ENCODE measurements at regions of chr2 and their contacts with region 1.

Region 1: GRCh38 chr2:233690435-233690834 is 2.3 kb upstream of the UGT1A6 start:
- DNase-seq: peak; percentile 96 to 99
- H3K4me3 ChIP-seq: peak overlapping the region; percentile 69; the same call in 1 of the 2 replicates
- H3K27ac ChIP-seq: peak overlapping the region; percentile 97
- H3K4me1 ChIP-seq: peaks cover 37% of the 10 kb centered on the region
- H3K27me3 ChIP-seq: no peaks in the 10 kb centered on the region
- CTCF ChIP-seq: no peak

Region 2: GRCh38 chr2:233178994-233179847 is 511.2 kb before region 1 on chr2:
- CTCF ChIA-PET with region 1: no interaction called
- POLR2A ChIA-PET with region 1: no interaction called
- intact Hi-C with region 1: no loop called
- DNase-seq: peak in 1 of 2 experiments; percentile 23
- H3K4me3 ChIP-seq: no peak overlapping the region
- H3K27ac ChIP-seq: no peak overlapping the region
- H3K4me1 ChIP-seq: peaks cover 14% of the 10 kb centered on the region; the same call in 1 of the 2 replicates
- H3K27me3 ChIP-seq: no peaks in the 10 kb centered on the region
- CTCF ChIP-seq: no peak

Region 3: GRCh38 chr2:233353769-233354499 is 336.5 kb before region 1 on chr2 and contains the start of gene DGKD:
- CTCF ChIA-PET with region 1: no interaction called
- POLR2A ChIA-PET with region 1: no interaction called
- intact Hi-C with region 1: loop called (anchors 5 kb)
- DNase-seq: peak; percentile 78 to 79
- H3K4me3 ChIP-seq: peak within 1 kb of the TSS; percentile 67
- H3K27ac ChIP-seq: peak within 1 kb of the TSS; percentile 65
- H3K4me1 ChIP-seq: peaks cover 79% of the 10 kb centered on the region
- H3K27me3 ChIP-seq: no peaks in the 10 kb centered on the region
- CTCF ChIP-seq: peak; percentile 76
- total RNA-seq, gene DGKD: 43.1 and 59.5 TPM in 2 replicates

Region 4: GRCh38 chr2:233486778-233487552 is 203.5 kb before region 1 on chr2:
- CTCF ChIA-PET with region 1: no interaction called
- POLR2A ChIA-PET with region 1: interaction called, 31 read pairs
- intact Hi-C with region 1: loop called (anchors 1 kb)
- DNase-seq: peak; percentile 63 to 100
- H3K4me3 ChIP-seq: 0 out of 2 replicates have a peak overlapping the region, but pooled peaks have one; percentile 1
- H3K27ac ChIP-seq: peak overlapping the region; percentile 93
- H3K4me1 ChIP-seq: peaks cover 61% of the 10 kb centered on the region
- H3K27me3 ChIP-seq: no peaks in the 10 kb centered on the region
- CTCF ChIP-seq: no peak

Region 5: DNA sequence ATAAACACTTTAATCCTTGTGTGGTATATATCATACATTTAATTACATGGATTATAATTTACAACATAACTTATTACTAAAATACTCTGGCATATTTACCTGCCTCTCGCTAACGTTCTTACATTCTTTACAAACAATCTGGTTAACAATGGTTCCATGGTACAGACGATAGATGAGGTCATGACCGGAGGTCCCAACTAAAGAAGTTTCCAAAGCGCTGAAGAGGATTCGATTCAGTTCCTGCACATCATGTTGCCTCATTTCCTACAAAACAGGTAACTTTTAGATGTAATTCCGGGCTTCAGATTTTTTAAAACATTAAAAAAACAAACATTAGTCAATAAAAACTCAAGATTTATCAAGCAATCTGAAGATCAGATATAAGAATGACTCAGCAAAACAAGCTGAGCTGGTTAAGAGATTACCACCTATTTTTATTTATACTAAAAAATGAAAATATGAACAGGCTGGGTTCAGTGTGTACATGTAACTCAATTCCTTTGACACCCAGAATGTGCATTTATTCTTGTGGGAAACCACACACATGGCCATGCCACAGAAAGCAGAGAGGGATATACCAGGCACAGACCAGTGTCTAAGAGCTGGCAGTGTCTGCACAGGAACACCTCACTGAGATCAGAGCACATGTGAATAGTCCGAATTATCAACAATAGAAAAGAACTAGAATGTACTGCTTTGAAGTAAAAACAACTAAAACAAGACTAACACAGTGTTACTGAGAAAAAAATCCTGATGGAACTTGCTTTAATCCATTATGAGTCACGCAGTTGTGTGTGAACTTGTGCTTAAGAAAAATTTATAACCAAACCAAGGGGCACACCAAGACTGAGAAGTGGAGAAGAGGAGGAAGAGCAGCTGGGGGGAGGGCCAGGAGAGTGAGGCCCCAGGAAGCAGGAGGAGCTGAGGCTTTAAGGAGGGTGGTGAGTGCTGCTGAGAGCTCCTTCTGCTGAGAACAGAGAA is 133.4 kb before region 1 on chr2:
- CTCF ChIA-PET with region 1: interaction called, 6 read pairs
- POLR2A ChIA-PET with region 1: interaction called, 20 read pairs
- intact Hi-C with region 1: loop called (anchors 1 kb)
- DNase-seq: peak; percentile 55 to 89
- H3K4me3 ChIP-seq: peak overlapping the region; percentile 25; the same call in 1 of the 2 replicates
- H3K27ac ChIP-seq: peak overlapping the region; percentile 98
- H3K4me1 ChIP-seq: peaks cover 41% of the 10 kb centered on the region
- H3K27me3 ChIP-seq: no peaks in the 10 kb centered on the region
- CTCF ChIP-seq: no peak

Region 6: GRCh38 chr2:233705911-233706506 is 15.6 kb after region 1 on chr2:
- CTCF ChIA-PET with region 1: no interaction called
- POLR2A ChIA-PET with region 1: interaction called, 53 read pairs
- intact Hi-C with region 1: loop called (anchors 1 kb)
- DNase-seq: peak; percentile 97
- H3K4me3 ChIP-seq: peak overlapping the region; percentile 15; the same call in 1 of the 2 replicates
- H3K27ac ChIP-seq: peak overlapping the region; percentile 95
- H3K4me1 ChIP-seq: peaks cover 97% of the 10 kb centered on the region
- H3K27me3 ChIP-seq: no peaks in the 10 kb centered on the region
- CTCF ChIP-seq: no peak

Region 7: DNA sequence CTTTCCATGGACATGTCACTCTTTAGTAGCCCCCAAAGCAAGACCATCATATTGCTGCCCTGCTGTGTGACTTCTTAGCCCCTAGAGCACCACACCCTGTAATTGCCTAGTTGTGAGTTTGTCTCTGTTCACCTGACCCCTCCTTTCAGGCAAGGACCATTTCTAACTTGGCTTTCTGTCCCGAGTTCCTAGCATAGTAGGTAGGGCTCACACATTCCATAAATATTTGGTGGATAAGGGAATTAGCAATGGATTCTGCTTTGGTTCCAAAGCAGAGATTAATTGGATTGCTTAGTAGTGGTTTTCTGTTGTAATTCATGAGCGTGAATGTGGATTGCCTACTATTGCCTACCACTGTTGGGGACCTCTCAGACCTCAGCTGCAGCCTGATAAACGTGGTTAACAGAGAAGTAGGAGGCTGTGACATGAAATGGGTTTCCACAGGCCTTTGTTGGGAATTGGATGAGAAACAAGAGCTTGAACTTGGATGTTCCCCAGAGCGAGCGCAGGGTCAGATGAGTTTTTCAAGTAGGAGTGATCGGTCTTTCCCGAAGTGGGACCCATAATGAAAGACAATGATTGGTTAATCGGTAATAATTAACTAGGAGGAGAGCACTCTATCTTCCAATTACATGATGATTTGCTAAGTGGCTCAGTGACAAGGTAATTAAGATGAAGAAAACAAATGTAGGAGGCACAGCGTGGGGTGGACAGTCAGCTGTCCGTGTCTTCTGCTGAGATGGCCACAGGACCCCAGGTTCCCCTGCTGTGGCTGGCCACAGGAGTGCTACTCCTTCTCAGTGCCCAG is 56.2 kb after region 1 on chr2:
- CTCF ChIA-PET with region 1: no interaction called
- POLR2A ChIA-PET with region 1: no interaction called
- intact Hi-C with region 1: no loop called
- DNase-seq: peak in 1 of 2 experiments; percentile 23
- H3K4me3 ChIP-seq: no peak overlapping the region
- H3K27ac ChIP-seq: no peak overlapping the region
- H3K4me1 ChIP-seq: no peaks in the 10 kb centered on the region
- H3K27me3 ChIP-seq: no peaks in the 10 kb centered on the region
- CTCF ChIP-seq: no peak

Region 8: GRCh38 chr2:233832869-233833311 is 142.5 kb after region 1 on chr2:
- CTCF ChIA-PET with region 1: no interaction called
- POLR2A ChIA-PET with region 1: interaction called, 3 read pairs
- intact Hi-C with region 1: loop called (anchors 2 kb)
- DNase-seq: peak; percentile 77 to 83
- H3K4me3 ChIP-seq: no peak overlapping the region
- H3K27ac ChIP-seq: no peak overlapping the region
- H3K4me1 ChIP-seq: no peaks in the 10 kb centered on the region
- H3K27me3 ChIP-seq: no peaks in the 10 kb centered on the region
- CTCF ChIP-seq: peak; percentile 74

Measured in PC-9 (cell line).